Endothelial cell of umbilical vein (primary cell): ENCODE measurements at regions of chr4 and their contacts with region 1.

Region 1: DNA sequence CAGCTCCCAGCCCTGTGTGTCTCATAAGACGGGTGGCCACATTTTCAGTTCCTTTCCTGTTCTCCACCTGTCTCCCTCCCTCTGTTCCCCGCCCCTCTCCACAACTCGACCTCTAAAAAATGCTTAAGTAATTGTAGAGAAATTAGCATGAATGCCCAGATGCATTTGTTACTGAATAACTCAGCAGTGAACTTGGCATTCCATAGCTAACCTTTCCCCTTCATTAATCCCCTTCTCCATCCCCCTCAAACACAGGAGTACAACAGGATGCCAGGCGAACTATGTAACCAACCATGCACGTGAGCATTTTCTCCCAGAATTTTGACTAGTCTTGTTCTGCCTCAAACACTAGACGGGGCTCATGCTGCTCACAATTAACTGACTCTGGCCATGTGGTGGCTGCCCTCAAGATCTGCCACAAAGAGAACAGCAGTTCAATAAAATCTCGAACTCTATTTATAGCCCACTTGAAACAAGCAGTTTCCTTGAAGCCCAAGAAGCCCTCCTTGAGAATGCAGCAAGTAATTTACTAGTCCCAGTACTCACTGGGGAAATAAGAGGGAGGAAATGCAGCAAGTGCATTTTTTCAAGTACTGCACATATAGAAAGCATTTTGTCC is 351.2 kb downstream of the ARHGAP24 start:
- DNase-seq: peak; percentile 66
- H3K4me3 ChIP-seq: no peak overlapping the region
- H3K27ac ChIP-seq: peak overlapping the region; percentile 48
- H3K4me1 ChIP-seq: peaks cover 52% of the 10 kb centered on the region
- H3K27me3 ChIP-seq: no peaks in the 10 kb centered on the region
- CTCF ChIP-seq: no peak
- POLR2A ChIP-seq: no peak

Region 2: DNA sequence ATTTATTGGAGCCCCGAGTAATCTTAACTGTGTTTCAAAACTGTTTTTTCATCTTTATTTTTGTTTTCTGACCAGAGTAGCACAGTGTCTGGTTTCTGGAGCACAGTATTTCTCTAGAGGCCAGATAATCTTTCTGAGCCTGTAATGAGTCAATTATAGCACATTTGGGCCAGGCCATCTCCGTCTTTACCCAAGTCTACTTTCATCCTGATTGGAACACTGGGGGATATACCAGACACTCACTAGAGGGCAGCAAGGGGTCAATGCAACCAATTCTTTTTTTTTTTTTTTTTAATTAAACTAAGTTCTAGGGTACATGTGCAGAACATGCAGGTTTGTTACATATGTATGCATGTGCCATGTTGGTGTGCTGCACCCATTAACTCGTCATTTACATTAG is 69.2 kb before region 1 on chr4:
- CTCF ChIA-PET with region 1: no interaction called
- POLR2A ChIA-PET with region 1: no interaction called
- dilution Hi-C with region 1: no loop called
- intact Hi-C with region 1: no loop called
- DNase-seq: peak; percentile 68
- H3K4me3 ChIP-seq: no peak overlapping the region
- H3K27ac ChIP-seq: no peak overlapping the region
- H3K4me1 ChIP-seq: peaks cover 22% of the 10 kb centered on the region
- H3K27me3 ChIP-seq: no peaks in the 10 kb centered on the region
- CTCF ChIP-seq: peak; percentile 38 to 57
- POLR2A ChIP-seq: no peak

Region 3: DNA sequence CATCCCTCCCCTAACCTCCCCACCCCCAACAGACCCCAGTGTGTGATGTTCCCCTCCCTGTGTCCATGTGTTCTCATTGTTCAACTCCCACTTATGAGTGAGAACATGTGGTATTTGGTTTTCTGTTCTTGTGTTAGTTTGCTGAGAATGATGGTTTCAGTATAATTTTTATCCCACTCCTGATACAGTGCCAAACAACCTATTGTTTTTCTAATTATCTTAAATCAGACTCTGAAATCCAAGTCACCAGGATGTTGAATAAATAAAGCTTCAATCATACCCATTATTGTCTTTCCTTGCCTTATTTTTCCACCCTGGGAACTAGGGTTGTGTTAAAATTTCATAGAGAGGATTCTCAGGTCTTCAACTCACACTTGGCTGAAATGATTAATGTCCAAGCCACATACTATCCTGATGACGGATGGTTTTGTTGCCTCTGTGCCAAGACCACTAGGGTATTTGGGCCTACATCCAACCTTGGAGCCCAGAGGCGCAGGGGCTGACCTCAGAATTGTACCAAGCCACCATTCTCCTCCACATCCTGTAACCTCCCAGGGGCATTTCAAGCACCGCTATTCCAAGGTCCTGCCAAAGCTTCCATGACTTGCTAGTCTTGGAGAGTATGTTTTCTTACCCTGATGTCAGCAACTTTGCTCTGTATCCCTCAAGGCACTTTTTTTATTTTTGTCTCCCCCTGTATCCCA is 18.8 kb before region 1 on chr4:
- CTCF ChIA-PET with region 1: interaction called, 8 read pairs
- POLR2A ChIA-PET with region 1: no interaction called
- dilution Hi-C with region 1: no loop called
- intact Hi-C with region 1: loop called (anchors 1 kb)
- DNase-seq: peak; percentile 88
- H3K4me3 ChIP-seq: no peak overlapping the region
- H3K27ac ChIP-seq: peak overlapping the region; percentile 38
- H3K4me1 ChIP-seq: peaks cover 42% of the 10 kb centered on the region
- H3K27me3 ChIP-seq: no peaks in the 10 kb centered on the region
- CTCF ChIP-seq: no peak
- POLR2A ChIP-seq: no peak

Region 4: DNA sequence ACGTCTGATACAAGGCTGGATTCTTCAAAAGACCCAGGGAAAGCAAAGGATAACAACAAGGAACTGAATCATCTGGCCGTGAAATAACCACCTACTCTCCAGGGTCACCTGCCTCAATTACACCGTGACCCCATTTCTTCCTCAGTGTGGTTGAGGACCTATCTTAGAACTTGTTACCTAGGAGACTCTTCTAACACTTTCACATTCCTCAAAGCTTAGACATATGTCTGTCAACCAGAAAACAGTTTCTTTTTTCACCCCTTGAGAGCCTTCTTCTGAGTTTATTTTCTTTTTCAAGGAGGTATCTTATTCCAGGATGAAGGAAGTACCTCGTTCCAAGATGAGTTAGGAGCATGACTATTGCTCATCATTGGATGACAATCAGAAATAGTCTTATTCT is 13.4 kb before region 1 on chr4:
- CTCF ChIA-PET with region 1: interaction called, 8 read pairs
- POLR2A ChIA-PET with region 1: no interaction called
- dilution Hi-C with region 1: no loop called
- intact Hi-C with region 1: loop called (anchors 1 kb)
- DNase-seq: peak; percentile 70
- H3K4me3 ChIP-seq: no peak overlapping the region
- H3K27ac ChIP-seq: peak overlapping the region; percentile 51
- H3K4me1 ChIP-seq: peaks cover 31% of the 10 kb centered on the region
- H3K27me3 ChIP-seq: no peaks in the 10 kb centered on the region
- CTCF ChIP-seq: no peak
- POLR2A ChIP-seq: no peak